ENCODE measurements at regions of chr21 and their contacts with region 1.

Region 1: GRCh38 chr21:33789697-33790096 is 125.9 kb downstream of the ATP5PO start:
- DNase-seq: peak; percentile 19
- H3K4me3 ChIP-seq: no peak overlapping the region
- CTCF ChIP-seq: no peak

Region 2: GRCh38 chr21:33619726-33620125 is 170.0 kb before region 1 on chr21:
- in situ Hi-C with region 1: no loop called
- DNase-seq: no peak
- H3K4me3 ChIP-seq: no peak overlapping the region
- CTCF ChIP-seq: no peak

Region 3: DNA sequence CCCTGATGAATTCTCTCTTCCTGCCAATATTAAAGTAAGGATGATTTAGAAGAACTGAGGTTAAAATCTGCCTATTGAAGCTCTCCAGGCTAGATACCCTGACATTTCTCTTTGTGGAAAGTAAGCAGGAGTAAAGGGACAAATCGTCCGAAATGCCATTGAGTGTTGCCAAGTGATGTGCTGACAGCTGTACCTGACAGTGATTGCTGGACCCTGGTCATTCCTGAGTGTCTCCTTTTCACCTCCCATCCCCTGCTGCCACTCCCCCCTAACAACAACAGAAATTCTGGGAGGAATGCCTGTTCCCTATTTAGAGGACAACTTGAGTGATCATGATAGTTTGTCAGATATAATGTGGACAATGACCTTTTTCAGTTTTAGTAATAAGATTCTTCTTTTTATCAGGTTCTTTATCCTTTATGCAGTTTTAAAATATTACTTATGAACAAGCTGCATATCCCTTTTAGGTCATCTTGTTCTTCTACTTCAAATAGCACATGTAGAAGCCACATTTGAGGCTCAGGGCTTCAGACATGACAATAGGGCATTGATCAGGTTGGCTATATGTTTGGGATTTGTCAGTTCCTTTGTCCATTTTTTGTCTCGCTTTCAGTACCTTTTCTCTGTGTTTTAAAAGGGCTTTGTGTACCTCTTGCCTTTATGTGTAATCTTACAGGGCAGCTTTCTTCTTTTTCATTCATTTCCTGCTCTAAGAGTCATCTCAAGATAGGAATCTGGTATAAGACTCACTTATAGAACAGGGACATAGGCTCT is 91.4 kb before region 1 on chr21:
- in situ Hi-C with region 1: loop called (anchors 5 kb)
- DNase-seq: no peak
- H3K4me3 ChIP-seq: no peak overlapping the region
- CTCF ChIP-seq: no peak

Region 4: GRCh38 chr21:33721081-33721480 is 68.6 kb before region 1 on chr21:
- in situ Hi-C with region 1: loop called (anchors 5 kb)
- DNase-seq: no peak
- H3K4me3 ChIP-seq: no peak overlapping the region
- CTCF ChIP-seq: no peak

Region 5: DNA sequence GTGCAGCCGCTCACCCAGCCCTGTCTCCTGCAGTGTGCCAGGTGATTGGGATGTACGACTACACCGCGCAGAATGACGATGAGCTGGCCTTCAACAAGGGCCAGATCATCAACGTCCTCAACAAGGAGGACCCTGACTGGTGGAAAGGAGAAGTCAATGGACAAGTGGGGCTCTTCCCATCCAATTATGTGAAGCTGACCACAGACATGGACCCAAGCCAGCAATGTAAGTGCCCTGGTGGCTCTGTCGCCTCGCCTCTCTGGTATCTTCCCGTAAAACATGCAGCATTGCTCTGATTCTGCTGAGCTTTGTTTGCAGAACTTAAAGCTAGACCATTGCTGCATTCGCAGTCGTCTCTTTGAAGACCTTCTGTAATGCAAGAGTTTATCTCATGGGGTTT is 46.7 kb after region 1 on chr21:
- in situ Hi-C with region 1: no loop called
- DNase-seq: no peak
- H3K4me3 ChIP-seq: no peak overlapping the region
- CTCF ChIP-seq: no peak